Breast epithelium (tissue), 4 donors: ENCODE measurements at regions of chr5 and their contacts with region 1.

Region 1: GRCh38 chr5:132495667-132496190 is 5.2 kb upstream of the IRF1 start:
- DNase-seq: peak; percentile 73
- H3K4me3 ChIP-seq: peak overlapping the region; percentile 67 to 80 (median 69)
- H3K27ac ChIP-seq: peak overlapping the region; percentile 96 to 97
- H3K4me1 ChIP-seq: peaks cover 0 to 16% of the 10 kb centered on the region in 2 donors
- H3K27me3 ChIP-seq: no peaks in the 10 kb centered on the region
- CTCF ChIP-seq: no peak
- POLR2A ChIP-seq: no peak

Region 2: DNA sequence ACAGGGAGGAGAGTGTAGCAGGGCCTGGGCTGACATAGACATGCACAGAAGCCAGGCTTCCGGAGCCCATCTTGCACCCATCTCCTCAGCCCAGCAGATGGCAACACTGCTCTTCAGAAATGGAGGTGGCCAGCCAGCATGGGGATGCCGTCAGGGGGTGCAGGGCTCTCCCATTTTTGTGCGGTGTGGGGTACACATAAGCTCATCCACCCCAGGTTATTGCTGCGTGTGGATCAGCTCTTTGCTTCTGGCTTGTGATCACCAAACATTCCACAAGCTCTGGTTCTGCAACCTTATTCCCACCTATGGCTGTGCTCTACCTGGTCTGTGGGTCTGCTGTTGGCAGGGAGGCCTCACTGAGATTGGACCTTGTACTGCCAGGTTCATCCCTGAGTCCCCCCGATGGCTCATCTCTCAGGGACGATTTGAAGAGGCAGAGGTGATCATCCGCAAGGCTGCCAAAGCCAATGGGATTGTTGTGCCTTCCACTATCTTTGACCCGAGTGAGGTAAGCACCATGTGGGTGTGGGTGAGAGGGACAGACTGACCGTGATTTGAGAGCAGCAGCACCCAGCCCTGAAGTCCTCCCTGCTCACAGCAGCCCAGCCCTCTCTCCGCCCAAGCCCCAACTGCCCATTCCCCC is 109.0 kb before region 1 on chr5:
- intact Hi-C with region 1: loop called (anchors 5 kb)
- DNase-seq: peak in 1 of 2 donors; percentile 63
- H3K4me3 ChIP-seq: peak overlapping the region in 1 of 3 donors; percentile 13
- H3K27ac ChIP-seq: peak overlapping the region; percentile 96 to 97
- H3K4me1 ChIP-seq: peaks cover 21 to 42% of the 10 kb centered on the region in 2 donors
- H3K27me3 ChIP-seq: no peaks in the 10 kb centered on the region
- CTCF ChIP-seq: peak; percentile 78 to 83 (median 82)
- POLR2A ChIP-seq: no peak

Region 3: DNA sequence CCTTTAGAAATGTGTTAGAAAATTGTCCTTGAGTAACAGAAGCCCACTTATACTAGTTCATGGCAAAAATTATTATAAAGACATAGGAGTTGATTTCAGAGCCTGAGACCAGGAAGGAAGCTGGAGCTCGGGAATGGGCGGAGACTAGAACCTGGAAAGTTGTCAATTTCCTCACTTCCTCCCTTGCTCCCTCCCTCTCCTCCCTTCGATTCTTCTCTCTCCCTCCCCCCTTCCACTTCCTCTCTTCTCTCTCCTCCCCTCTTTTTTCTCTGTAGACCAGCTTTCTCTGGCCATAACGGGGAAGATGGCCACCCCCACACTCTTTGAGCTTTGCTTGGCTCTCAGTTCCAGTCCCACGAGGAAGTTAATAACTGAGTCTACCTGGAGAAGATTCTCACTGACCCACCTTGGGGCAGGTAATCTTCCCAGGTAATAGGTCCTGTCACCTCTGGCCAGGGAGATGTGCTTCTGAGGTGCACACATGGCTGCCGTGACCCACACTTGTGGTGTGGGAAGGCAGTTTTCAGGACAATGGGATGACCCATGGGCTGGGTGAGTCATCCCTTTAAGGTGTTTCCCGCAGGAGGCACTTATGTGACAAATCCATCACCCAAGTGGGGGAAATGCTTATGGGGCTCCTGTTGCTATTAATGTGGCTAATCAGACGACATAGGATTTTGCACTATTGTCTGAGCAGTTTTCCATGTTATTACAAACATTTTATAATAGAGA is 634.8 kb after region 1 on chr5:
- intact Hi-C with region 1: no loop called
- DNase-seq: peak in 1 of 2 donors; percentile 3
- H3K4me3 ChIP-seq: no peak overlapping the region
- H3K27ac ChIP-seq: no peak overlapping the region
- H3K4me1 ChIP-seq: no peaks in the 10 kb centered on the region
- H3K27me3 ChIP-seq: no peaks in the 10 kb centered on the region
- CTCF ChIP-seq: no peak
- POLR2A ChIP-seq: no peak